ENCODE measurements at regions of chr6 and their contacts with region 1.

Region 1: GRCh38 chr6:31251261-31251660 is 20.6 kb downstream of the HLA-C start:
- DNase-seq: no peak
- H3K4me3 ChIP-seq: no peak overlapping the region
- H3K4me3 Mint-ChIP-seq: no peak overlapping the region
- H3K27ac ChIP-seq: no peak overlapping the region
- H3K27ac Mint-ChIP-seq: no peak overlapping the region
- H3K4me1 ChIP-seq: no peaks in the 10 kb centered on the region
- H3K4me1 Mint-ChIP-seq: no peaks in the 10 kb centered on the region
- H3K27me3 ChIP-seq: no peaks in the 10 kb centered on the region
- H3K27me3 Mint-ChIP-seq: peaks cover 3 to 12% (median 10%) of the 10 kb centered on the region in 3 donors
- CTCF ChIP-seq: no peak

Region 2: DNA sequence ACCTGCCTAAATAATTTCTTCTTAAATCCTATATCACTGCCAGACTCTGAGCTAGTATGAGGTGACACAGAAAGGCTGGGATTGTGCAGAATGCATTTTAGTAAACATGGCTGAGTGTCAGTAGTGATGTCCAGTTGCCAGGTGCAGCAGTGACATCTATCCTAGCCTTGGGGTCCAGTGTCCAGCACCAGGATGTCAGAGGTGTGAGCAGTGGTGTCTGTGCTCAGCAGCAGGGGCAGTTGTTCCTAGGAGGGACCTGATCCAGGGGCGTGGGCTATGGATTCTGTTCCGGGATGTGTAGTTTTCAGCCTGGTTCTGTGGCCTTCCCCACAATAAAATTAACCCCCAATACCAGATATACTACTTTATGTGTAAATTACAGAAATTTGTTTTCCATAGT is 14.7 kb after region 1 on chr6:
- intact Hi-C with region 1: loop called in 1 of 2 experiments (anchors 1 kb)
- DNase-seq: no peak
- H3K4me3 ChIP-seq: no peak overlapping the region
- H3K4me3 Mint-ChIP-seq: no peak overlapping the region
- H3K27ac ChIP-seq: no peak overlapping the region
- H3K27ac Mint-ChIP-seq: peak overlapping the region in 1 of 7 donors; percentile 76
- H3K4me1 ChIP-seq: peaks cover 18 to 20% of the 10 kb centered on the region in 2 donors
- H3K4me1 Mint-ChIP-seq: peaks cover 36% of the 10 kb centered on the region
- H3K27me3 ChIP-seq: no peaks in the 10 kb centered on the region
- H3K27me3 Mint-ChIP-seq: peaks cover 0 to 14% (median 2%) of the 10 kb centered on the region in 3 donors
- CTCF ChIP-seq: no peak